ENCODE measurements at regions of chr9 and their contacts with region 1.

Region 1: DNA sequence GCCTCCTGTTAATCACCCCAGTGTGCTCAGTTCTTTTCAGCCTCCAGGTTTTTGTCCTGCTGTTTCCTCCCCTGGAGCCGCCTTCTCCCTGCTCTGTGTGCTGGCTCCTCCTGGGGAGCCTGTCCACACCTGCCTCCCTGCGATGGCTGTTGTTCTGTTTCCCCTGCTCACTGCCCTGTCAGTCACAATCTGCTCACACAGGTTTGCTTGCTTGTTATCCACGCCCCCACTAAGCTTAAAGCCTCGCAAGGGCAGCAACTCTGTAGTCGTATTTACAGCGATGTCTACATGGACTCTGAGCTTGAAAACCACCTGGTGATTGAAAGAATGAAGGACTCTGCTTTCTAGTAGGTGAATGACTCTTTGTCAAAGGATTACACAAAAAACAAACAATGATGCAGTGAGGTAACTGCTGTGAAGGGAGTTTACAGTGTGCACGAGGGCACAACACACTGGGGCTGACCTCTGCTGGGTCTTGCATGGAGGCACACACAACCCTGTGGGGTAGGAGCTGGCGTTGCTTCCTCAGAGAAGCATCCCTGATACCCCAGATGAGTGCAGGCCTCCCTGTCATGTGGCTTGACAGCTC is 39.6 kb upstream of the TEX48 start:
- DNase-seq: no peak
- H3K4me3 ChIP-seq: no peak overlapping the region
- H3K27ac ChIP-seq: no peak overlapping the region
- H3K4me1 ChIP-seq: no peaks in the 10 kb centered on the region
- H3K27me3 ChIP-seq: no peaks in the 10 kb centered on the region
- CTCF ChIP-seq: no peak

Region 2: DNA sequence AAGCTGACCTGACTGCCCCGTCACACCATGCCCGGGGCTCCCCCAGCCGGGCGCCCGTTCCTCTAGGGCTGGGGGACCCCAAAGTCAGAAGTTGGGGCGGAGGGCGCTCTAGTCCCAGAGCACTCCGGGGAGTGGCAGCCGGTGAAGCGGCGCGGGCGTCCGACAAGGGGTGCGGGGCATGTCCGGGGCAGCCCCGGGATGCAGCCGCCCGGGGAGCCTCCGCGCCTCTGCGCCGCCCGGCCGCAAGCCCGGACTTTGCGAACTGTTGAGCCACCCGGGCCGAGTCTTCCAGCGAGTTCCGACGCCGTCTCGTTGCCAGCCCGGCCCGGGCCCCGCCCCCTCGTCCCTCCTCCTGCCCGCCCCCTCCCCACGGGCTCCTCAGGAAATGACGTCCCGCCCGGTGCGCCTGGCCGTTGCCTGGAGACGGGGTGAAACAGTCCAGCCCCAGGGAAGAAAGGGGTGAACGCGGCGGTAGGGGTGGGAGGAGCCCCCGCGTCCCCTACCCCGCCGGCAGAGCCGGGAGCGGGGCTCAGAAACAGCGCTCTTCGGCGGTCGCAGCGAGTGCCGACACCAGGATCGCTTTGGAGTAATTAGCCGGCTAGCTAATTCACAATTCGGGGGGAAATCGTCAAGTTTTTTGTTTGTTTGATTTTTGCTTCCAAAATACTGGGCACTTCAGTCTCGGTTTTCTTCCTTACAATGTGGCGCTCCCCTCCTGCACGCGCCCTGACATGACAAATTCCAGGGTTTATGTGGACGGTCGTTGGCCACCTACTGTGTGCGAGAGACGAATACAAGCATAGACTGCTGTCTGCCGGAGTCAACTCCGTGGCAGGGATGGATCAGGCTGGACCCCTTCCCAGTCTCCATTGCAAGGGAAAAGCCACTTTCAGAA is 216.2 kb before region 1 on chr9 and contains the start of gene WHRN:
- intact Hi-C with region 1: no loop called
- DNase-seq: peak; percentile 73 to 93
- H3K4me3 ChIP-seq: peak within 1 kb of the TSS; percentile 54 to 64
- H3K27ac ChIP-seq: no peak within 1 kb of the TSS
- H3K4me1 ChIP-seq: peaks cover 0 to 5% of the 10 kb centered on the region in 2 donors
- H3K27me3 ChIP-seq: no peaks in the 10 kb centered on the region
- CTCF ChIP-seq: no peak
- total RNA-seq, gene WHRN: 3.9 TPM

Region 3: DNA sequence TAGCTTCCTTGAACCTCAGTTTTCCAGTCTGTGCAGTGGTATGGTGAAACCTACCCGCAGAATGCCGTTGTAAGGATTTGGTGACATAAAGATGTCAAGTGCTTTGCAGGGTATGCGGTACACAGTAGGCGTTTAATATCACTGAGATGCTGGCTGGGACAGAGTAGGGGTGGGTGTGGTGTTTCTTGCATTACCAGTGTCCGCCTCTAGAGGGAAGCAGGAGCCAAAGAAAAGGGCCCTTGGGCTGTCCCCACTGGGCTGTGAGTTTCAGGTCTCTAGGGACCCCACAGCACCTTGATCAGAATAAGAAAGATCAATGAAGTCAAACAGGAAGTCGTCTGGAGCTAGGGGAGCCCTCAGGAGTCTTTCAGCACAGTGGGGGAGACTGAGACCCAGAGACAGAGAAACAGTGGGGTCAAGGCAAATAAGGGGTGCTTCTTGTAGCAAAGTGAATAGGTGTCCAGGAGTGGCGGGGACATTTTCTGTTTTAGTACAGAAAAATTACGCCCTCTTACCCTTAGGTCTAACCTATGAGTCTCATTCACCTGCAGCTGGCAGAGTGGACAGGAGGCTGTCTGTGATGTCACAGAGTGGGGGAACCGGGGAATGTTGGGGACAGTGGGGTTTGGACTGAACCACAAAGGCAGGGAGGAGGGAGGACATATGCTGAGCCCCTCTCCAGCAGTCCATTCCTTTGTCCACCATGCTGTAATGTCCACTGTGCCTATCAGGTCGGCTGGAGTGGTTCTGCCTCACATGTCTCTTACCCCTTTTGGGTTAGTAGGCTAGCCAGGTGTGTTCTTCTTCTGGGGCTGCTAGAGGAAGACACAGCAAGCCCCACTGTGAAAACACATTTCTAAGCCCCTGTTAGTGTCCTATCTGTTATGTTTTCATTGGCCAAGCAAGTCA is 59.2 kb before region 1 on chr9:
- intact Hi-C with region 1: loop called (anchors 10 kb)
- DNase-seq: no peak
- H3K4me3 ChIP-seq: no peak overlapping the region
- H3K27ac ChIP-seq: no peak overlapping the region
- H3K4me1 ChIP-seq: no peaks in the 10 kb centered on the region
- H3K27me3 ChIP-seq: no peaks in the 10 kb centered on the region
- CTCF ChIP-seq: peak; percentile 64 to 73 (median 67)

Measured in ascending aorta (tissue), 2 donors.